Caco-2 (cell line): ENCODE measurements at regions of chr11 and their contacts with region 1.

Region 1: GRCh38 chr11:61747192-61747966 is 5.1 kb upstream of the MYRF start:
- DNase-seq: peak; percentile 86 to 92
- H3K4me3 ChIP-seq: no peak overlapping the region
- H3K4me3 Mint-ChIP-seq: no peak overlapping the region
- H3K27ac Mint-ChIP-seq: no peak overlapping the region
- H3K4me1 ChIP-seq: peaks cover 22% of the 10 kb centered on the region
- H3K4me1 Mint-ChIP-seq: peaks cover 7% of the 10 kb centered on the region
- H3K27me3 ChIP-seq: no peaks in the 10 kb centered on the region
- H3K27me3 Mint-ChIP-seq: no peaks in the 10 kb centered on the region
- CTCF ChIP-seq: peak; percentile 93 to 97

Region 2: GRCh38 chr11:61769169-61769920 is 22.0 kb after region 1 on chr11:
- CTCF ChIA-PET with region 1: interaction called, 55 read pairs
- POLR2A ChIA-PET with region 1: interaction called, 4 read pairs
- intact Hi-C with region 1: no loop called
- DNase-seq: peak; percentile 91 to 92
- H3K4me3 ChIP-seq: peak overlapping the region; percentile 1; the same call in 1 of the 2 replicates
- H3K4me3 Mint-ChIP-seq: peak overlapping the region; percentile 63
- H3K27ac Mint-ChIP-seq: peak overlapping the region; percentile 87
- H3K4me1 ChIP-seq: peaks cover 59% of the 10 kb centered on the region
- H3K4me1 Mint-ChIP-seq: peaks cover 21% of the 10 kb centered on the region
- H3K27me3 ChIP-seq: no peaks in the 10 kb centered on the region
- H3K27me3 Mint-ChIP-seq: no peaks in the 10 kb centered on the region
- CTCF ChIP-seq: peak; percentile 66 to 89

Region 3: DNA sequence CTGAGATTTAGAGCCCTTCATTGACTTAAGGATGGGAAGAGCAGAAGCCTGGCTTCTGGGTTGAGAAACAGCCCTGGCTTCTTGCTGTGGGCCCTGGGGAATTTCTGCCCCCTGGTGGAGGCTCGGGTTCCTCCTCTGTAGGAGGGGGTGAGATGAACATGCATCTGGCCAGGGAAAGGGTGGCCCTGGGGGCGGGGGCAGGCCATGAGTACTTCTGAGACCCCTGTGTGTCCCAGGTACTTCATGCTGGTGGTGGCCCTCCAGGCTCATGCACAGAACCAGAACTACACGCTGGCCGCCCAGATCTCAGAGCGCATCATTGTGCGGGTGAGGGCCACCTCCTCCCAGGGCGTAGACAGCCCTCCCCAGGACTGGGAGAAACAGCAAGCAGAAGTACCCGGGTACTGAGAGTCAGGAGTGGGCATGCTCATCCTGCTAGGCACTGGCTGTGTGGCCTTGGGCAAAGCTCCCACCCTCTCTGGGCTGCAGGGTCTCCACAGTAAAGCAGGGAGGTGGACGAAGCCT is 29.2 kb after region 1 on chr11:
- CTCF ChIA-PET with region 1: interaction called, 8 read pairs
- POLR2A ChIA-PET with region 1: interaction called, 3 read pairs
- intact Hi-C with region 1: loop called (anchors 1 kb)
- DNase-seq: peak; percentile 77 to 81
- H3K4me3 ChIP-seq: no peak overlapping the region
- H3K4me3 Mint-ChIP-seq: no peak overlapping the region
- H3K27ac Mint-ChIP-seq: no peak overlapping the region
- H3K4me1 ChIP-seq: peaks cover 7% of the 10 kb centered on the region; the same call in 1 of the 2 replicates
- H3K4me1 Mint-ChIP-seq: peaks cover 7% of the 10 kb centered on the region
- H3K27me3 ChIP-seq: no peaks in the 10 kb centered on the region
- H3K27me3 Mint-ChIP-seq: no peaks in the 10 kb centered on the region
- CTCF ChIP-seq: peak; percentile 76 to 82

Region 4: GRCh38 chr11:61816736-61817455 is 69.5 kb after region 1 on chr11 and contains the start of gene FADS1:
- CTCF ChIA-PET with region 1: interaction called, 15 read pairs
- POLR2A ChIA-PET with region 1: interaction called, 5 read pairs
- intact Hi-C with region 1: no loop called
- DNase-seq: peak; percentile 98 to 99
- H3K4me3 ChIP-seq: peak within 1 kb of the TSS; percentile 85
- H3K4me3 Mint-ChIP-seq: peak within 1 kb of the TSS; percentile 81
- H3K27ac Mint-ChIP-seq: peak within 1 kb of the TSS; percentile 90
- H3K4me1 ChIP-seq: peaks cover 16% of the 10 kb centered on the region
- H3K4me1 Mint-ChIP-seq: peaks cover 18% of the 10 kb centered on the region
- H3K27me3 ChIP-seq: no peaks in the 10 kb centered on the region
- H3K27me3 Mint-ChIP-seq: no peaks in the 10 kb centered on the region
- CTCF ChIP-seq: peak; percentile 72 to 95
- total RNA-seq, gene FADS1: 108 and 116 TPM in 2 replicates